BJ (cell line): ENCODE measurements at regions of chr15 and their contacts with region 1.

Region 1: DNA sequence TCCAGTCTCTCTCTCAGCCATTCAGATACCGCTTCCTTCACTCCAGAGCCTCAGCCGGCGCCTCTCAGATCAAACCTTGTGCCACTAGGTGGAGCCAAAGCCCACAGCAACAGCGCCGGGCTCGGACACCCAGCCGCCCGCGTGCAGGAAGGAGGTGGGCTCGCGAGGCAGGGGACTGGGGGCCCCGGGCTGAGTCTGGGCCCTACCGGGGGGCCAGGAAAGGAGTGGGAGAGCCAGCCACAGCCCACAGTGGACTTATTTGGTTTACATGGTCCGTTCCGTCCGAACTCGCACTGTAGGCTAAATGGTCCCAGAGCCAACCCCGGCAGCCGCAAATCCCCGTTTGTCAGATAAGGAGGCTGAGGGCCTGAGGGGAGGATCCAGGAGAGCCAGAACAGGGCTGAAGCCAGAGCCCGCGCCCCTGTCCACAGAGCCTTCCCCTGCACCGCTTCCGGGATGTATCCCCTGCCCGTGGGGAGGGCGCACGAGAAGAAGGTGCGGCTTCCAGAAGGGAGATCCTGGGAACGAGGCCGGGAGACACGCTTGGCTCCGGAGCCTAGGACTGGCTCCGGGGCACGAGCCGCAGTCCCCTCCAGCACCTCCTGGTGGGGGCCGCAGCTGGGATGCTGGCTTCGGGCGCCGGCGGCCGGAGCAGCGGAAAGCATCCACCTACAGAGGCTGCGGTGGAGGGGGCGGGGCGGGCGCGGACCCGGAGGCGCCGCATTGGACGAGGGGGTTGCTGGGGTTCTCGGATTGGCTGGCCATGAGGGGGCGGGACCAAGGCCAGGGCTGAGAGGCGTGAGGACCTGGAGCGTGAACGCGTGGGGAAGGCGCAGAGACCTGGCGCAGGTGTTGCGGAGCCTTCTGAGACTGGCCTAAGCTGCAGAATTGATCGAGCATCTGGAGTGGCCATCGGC is 6.5 kb upstream of the CYP11A1 start:
- DNase-seq: no peak
- H3K4me3 ChIP-seq: peak overlapping the region; percentile 69
- H3K27me3 ChIP-seq: peaks cover 5% of the 10 kb centered on the region
- CTCF ChIP-seq: peak; percentile 88

Region 2: GRCh38 chr15:74396445-74397238 is 22.7 kb after region 1 on chr15:
- CTCF ChIA-PET with region 1: no interaction called
- POLR2A ChIA-PET with region 1: no interaction called
- DNase-seq: no peak
- H3K4me3 ChIP-seq: no peak overlapping the region
- H3K27me3 ChIP-seq: no peaks in the 10 kb centered on the region
- CTCF ChIP-seq: no peak

Region 3: GRCh38 chr15:74489518-74490338 is 115.7 kb after region 1 on chr15:
- CTCF ChIA-PET with region 1: interaction called, 18 read pairs
- POLR2A ChIA-PET with region 1: no interaction called
- DNase-seq: no peak
- H3K4me3 ChIP-seq: no peak overlapping the region
- H3K27me3 ChIP-seq: no peaks in the 10 kb centered on the region
- CTCF ChIP-seq: peak; percentile 72